ENCODE measurements at regions of chrX and their contacts with region 1.

Region 1: DNA sequence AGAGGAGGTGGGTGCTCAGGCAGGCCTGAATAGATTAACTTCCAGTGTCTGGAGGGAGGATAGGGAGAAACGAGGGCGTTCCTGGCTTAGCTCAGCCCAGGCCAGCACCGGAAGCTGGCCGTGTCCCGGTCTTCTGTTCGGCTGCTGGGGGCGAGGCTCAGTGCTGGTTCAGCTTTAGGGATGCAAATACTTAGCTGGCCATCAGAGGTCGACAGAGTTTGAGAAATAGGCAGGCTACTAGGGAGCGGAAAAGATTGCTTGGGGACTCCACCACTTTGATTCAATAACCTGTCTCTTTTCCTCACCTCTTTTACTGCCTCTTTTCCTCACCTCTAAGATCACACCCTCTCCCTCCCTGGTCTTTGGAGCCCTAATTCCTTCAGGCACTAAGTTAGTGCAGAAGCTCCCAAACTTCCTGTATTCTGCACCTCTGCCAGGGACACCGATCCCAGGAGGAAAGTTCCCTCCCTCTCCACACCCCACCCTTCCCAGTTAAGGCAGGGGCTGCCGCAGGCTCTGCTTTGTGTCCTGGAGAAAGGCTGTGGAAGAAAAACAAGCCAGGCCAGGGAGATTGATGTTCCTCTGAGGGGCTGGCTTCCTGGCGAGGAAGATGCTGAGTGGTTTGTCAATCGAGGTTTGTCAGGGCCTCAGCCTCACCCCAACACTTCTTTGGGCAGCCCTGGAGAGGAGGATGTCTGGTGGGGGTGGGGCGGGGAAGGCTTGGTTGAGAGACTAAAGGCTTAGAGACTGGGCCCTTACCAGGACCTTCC is 6.0 kb upstream of the EFNB1 start:
- DNase-seq: peak in 1 of 2 donors; percentile 32
- ATAC-seq: peak; percentile 86

Region 2: GRCh38 chrX:68568136-68568535 is 254.7 kb before region 1 on chrX:
- intact Hi-C with region 1: no loop called
- DNase-seq: no peak
- ATAC-seq: no peak

Region 3: GRCh38 chrX:69285881-69286564 is 463.2 kb after region 1 on chrX:
- intact Hi-C with region 1: loop called (anchors 5 to 10 kb)
- DNase-seq: peak; percentile 42 to 74
- ATAC-seq: peak; percentile 86